Posterior cingulate gyrus (tissue), 11 donors: ENCODE measurements at regions of chr19 and their contacts with region 1.

Region 1: DNA sequence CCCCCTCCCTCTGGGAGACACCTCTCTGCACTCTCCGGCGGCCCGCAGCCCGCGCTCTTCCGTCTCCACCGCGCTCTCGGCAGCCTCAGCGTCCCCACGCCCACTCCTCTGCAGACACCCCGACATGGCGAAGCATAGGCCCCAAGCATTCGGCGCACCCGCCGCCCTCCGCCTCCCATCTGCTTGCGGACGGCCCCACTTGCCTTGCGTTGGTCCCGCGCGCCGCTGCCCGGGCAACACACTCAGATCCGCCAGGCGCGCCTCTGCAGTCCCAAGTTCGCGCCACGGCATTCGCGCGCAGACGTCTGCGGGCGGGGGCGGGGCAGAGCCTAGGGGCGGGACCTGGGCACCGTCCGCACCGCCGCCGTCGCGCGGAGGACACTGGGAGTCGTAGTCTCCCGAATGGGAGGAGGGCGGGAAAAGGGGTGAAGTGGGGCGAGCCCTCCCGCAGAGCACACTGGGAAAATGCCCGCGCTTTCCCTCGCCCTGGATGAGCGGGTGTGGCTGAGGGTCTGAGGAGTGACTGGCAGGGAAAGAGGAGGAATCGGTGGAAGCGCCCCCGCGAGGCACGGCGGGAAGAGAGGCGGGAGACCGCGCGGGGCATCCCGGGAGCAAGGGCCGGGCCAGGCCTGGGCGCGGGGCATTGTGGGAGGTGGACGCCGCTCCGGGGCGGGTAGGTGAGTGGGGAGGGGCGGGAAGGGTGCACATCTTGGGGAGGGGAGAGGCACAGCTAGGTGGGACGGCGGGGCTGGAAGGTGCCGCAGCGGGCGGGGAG is at the starts of genes LIG1 and ZSWIM9:
- DNase-seq: peak; percentile 91 to 99 (median 93)

Region 2: DNA sequence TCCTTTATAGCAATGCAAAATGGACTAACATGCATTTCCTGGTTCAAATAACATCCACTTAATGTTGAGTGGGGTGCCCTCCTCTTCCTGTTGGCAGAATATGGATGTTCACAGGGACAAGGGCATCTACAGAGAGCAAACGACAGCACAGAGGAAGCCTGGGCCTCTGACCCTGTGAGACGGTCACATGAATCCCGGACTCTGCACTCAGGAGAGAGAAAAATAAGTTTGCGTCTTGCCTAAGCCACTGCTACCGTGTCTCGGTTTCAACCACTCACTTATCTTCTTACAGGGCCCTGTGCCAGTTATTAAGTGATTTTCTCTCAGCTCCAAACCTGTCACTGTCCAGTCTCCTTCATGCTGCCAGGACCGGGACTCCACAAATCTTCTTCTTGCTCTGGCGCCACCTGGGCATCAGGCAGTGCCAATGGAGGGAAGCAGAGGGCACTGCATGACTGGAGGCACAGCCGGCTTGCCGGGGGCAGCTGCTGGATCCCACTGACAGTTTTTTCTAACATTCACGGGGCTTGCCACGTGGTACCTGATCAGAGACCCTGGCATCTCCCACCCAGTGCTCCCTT is 11.9 kb before region 1 on chr19:
- intact Hi-C with region 1: no loop called
- DNase-seq: peak in 1 of 10 donors; percentile 60

Region 3: GRCh38 chr19:48203732-48204628 is 33.8 kb after region 1 on chr19:
- intact Hi-C with region 1: loop called (anchors 1 kb)
- DNase-seq: peak; percentile 93 to 99 (median 96)